A549 (cell line): ENCODE measurements at regions of chr19 and their contacts with region 1.

Region 1: GRCh38 chr19:41959056-41960053 is at the start of gene RABAC1:
- DNase-seq: peak; percentile 97 to 100
- ATAC-seq: peak; percentile 78 to 90
- H3K4me3 ChIP-seq: peak within 1 kb of the TSS; percentile 76
- H3K27ac ChIP-seq: peak within 1 kb of the TSS; percentile 80 to 87
- H3K4me1 ChIP-seq: peaks cover 13% of the 10 kb centered on the region
- CTCF ChIP-seq: peak; percentile 54
- EP300 ChIP-seq: no peak
- POLR2A ChIP-seq: peak; percentile 70
- RAD21 ChIP-seq: peak in 1 of 2 experiments; percentile 35; a peak in 1 of 5 replicates
- polyA plus RNA-seq, gene RABAC1: 117 and 137 TPM in 2 replicates

Region 2: DNA sequence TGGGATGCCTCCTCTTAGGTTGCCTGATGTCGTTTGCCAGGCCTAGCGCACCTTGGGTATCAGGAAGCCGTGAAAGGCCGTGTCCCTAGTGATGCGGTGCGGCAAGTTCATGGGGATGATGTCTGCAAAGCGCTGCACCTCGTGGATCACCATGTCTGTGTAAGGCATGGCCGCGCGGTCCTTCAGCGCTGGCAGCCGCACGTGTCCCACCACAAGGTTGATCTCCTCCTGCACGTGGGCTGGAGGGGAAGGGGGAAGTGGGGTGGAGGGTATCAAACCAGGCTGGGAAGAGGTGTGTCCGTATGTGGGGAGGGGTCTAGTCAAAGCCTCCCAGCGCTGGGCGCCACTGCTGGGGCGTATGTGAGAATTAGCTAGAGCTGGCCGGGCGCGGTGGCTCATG is 1137.2 kb before region 1 on chr19:
- CTCF ChIA-PET with region 1: no interaction called
- POLR2A ChIA-PET with region 1: no interaction called
- DNase-seq: no peak
- ATAC-seq: no peak
- H3K4me3 ChIP-seq: no peak overlapping the region
- H3K27ac ChIP-seq: peak overlapping the region in 1 of 2 experiments; percentile 31; a peak in 2 of 6 replicates
- H3K4me1 ChIP-seq: peaks cover 39% of the 10 kb centered on the region
- CTCF ChIP-seq: no peak
- EP300 ChIP-seq: no peak
- POLR2A ChIP-seq: no peak
- RAD21 ChIP-seq: no peak

Region 3: DNA sequence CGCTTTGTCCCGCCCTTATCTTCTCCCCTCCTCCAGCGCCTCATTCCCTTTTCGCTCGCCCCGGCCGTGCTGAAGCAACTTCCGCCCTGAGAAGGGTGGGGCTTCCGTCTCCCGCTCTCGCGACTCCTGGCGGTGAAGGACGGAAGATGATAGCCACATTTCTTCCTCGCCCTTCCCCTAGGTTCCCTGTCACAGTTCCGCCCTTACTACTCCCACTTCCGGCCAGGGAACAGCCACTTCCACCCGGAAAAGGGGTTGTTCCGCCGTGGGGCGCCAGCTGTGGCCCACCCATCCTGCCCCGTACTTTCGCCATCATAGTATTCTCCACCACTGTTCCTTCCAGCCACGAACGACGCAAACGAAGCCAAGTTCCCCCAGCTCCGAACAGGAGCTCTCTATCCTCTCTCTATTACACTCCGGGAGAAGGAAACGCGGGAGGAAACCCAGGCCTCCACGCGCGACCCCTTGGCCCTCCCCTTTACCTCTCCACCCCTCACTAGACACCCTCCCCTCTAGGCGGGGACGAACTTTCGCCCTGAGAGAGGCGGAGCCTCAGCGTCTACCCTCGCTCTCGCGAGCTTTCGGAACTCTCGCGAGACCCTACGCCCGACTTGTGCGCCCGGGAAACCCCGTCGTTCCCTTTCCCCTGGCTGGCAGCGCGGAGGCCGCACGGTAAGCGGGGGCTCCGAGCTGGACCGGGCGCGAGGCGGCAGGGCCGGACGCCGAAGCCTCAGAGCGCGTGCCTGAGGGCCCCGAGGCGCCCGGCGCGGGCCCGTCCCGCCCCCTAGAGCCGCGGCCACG is 99.5 kb before region 1 on chr19 and contains the start of gene RPS19:
- CTCF ChIA-PET with region 1: interaction called, 24 read pairs
- POLR2A ChIA-PET with region 1: interaction called, 34 read pairs
- DNase-seq: peak; percentile 100
- ATAC-seq: peak; percentile 86 to 92
- H3K4me3 ChIP-seq: peak within 1 kb of the TSS; percentile 89
- H3K27ac ChIP-seq: peak within 1 kb of the TSS; percentile 90 to 95
- H3K4me1 ChIP-seq: peaks cover 40% of the 10 kb centered on the region
- CTCF ChIP-seq: peak; percentile 56
- EP300 ChIP-seq: peak in 1 of 2 experiments; percentile 13; a peak in 1 of 5 replicates
- POLR2A ChIP-seq: peak; percentile 95
- RAD21 ChIP-seq: no peak; a peak in 1 of 5 replicates
- polyA plus RNA-seq, gene RPS19: 2,749 and 3,564 TPM in 2 replicates

Region 4: GRCh38 chr19:41883821-41884733 is 75.3 kb before region 1 on chr19:
- CTCF ChIA-PET with region 1: interaction called, 11 read pairs
- POLR2A ChIA-PET with region 1: interaction called, 3 read pairs
- DNase-seq: peak; percentile 100
- ATAC-seq: peak; percentile 78 to 97
- H3K4me3 ChIP-seq: peak overlapping the region; percentile 78
- H3K27ac ChIP-seq: peak overlapping the region; percentile 81 to 87
- H3K4me1 ChIP-seq: peaks cover 15% of the 10 kb centered on the region
- CTCF ChIP-seq: no peak; the same call in 2 of the 3 replicates
- EP300 ChIP-seq: peak in 1 of 2 experiments; percentile 53; a peak in 2 of 5 replicates
- POLR2A ChIP-seq: peak; percentile 73
- RAD21 ChIP-seq: no peak

Region 5: GRCh38 chr19:41928221-41928683 is 31.1 kb before region 1 on chr19 and contains the start of gene ERFL:
- CTCF ChIA-PET with region 1: interaction called, 31 read pairs
- POLR2A ChIA-PET with region 1: no interaction called
- DNase-seq: no peak
- ATAC-seq: peak; percentile 33 to 61
- H3K4me3 ChIP-seq: peak within 1 kb of the TSS; percentile 59
- H3K27ac ChIP-seq: peak within 1 kb of the TSS; percentile 29 to 77; a peak in 4 of 6 replicates
- H3K4me1 ChIP-seq: peaks cover 13% of the 10 kb centered on the region; the same call in 1 of the 3 replicates
- CTCF ChIP-seq: 0 out of 3 replicates have a peak, but pooled peaks have one; percentile 21
- EP300 ChIP-seq: no peak
- POLR2A ChIP-seq: no peak
- RAD21 ChIP-seq: no peak
- polyA plus RNA-seq, gene ERFL: 0.19 and 0.21 TPM in 2 replicates

Region 6: GRCh38 chr19:41945135-41945766 is 14.1 kb before region 1 on chr19:
- CTCF ChIA-PET with region 1: interaction called, 97 read pairs
- POLR2A ChIA-PET with region 1: no interaction called
- DNase-seq: no peak
- ATAC-seq: no peak
- H3K4me3 ChIP-seq: no peak overlapping the region
- H3K27ac ChIP-seq: no peak overlapping the region
- H3K4me1 ChIP-seq: peaks cover 5% of the 10 kb centered on the region; the same call in 1 of the 3 replicates
- CTCF ChIP-seq: no peak
- EP300 ChIP-seq: no peak
- POLR2A ChIP-seq: no peak; the same call in 1 of the 2 replicates
- RAD21 ChIP-seq: no peak